ENCODE measurements at regions of chr11 and their contacts with region 1.

Region 1: DNA sequence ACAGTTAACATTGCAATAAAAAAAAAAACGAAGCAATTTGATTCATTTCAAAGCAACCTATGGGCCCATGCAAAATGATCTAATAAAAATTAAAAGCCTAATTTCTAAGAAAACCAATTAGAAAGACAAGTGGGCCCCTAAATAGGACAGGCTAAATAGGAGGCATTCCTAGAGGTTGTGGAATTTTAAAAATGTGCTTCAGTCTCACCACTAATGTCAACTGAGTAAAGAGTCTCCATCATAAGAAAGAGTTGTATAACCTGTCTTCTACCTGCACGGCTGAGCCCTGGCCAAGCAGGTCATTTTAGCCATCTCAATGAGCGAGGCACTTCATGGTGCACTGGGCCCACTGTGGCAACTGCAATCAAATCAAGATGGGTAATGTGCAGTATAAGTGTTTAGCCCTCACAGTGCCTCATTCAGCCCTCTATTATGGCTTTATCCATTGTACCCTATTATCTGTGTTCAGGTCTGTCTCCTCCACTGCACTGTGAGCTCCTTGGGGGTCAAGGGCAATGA is 76.4 kb downstream of the PRSS23 start:
- DNase-seq: no peak
- ATAC-seq: no peak
- H3K4me3 ChIP-seq: no peak overlapping the region
- H3K27ac ChIP-seq: no peak overlapping the region
- H3K4me1 ChIP-seq: no peaks in the 10 kb centered on the region
- H3K27me3 ChIP-seq: no peaks in the 10 kb centered on the region

Region 2: DNA sequence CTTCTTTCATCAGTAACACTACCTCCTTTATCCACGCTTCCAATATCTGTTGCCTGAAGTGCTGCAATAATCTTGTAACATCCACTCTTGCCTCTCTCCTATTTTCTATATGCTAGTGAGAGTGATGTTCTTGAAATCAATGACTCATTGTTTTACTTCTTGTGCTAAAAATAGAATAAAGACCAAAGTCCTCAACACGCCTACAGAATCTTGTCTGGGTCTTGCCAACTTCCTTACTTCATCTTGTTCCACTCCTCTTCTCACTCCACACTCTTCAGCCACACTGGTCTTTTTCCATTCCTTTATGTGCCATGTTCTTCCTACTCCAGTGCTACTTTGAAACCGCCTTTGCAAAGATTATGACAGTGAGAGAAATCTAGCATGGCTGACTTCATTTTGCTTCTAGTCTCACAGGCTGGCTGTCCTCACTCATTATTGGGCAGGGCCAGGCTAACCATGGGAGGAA is 365.7 kb before region 1 on chr11:
- intact Hi-C with region 1: no loop called
- DNase-seq: no peak
- ATAC-seq: peak in 1 of 2 donors; percentile 44
- H3K4me3 ChIP-seq: no peak overlapping the region
- H3K27ac ChIP-seq: peak overlapping the region; percentile 37
- H3K4me1 ChIP-seq: peaks cover 14% of the 10 kb centered on the region
- H3K27me3 ChIP-seq: no peaks in the 10 kb centered on the region

Region 3: GRCh38 chr11:86919557-86920210 is 42.9 kb after region 1 on chr11:
- intact Hi-C with region 1: loop called (anchors 2 to 5 kb)
- DNase-seq: no peak
- ATAC-seq: peak; percentile 61 to 71
- H3K4me3 ChIP-seq: no peak overlapping the region
- H3K27ac ChIP-seq: peak overlapping the region; percentile 75
- H3K4me1 ChIP-seq: peaks cover 4% of the 10 kb centered on the region
- H3K27me3 ChIP-seq: no peaks in the 10 kb centered on the region

Region 4: GRCh38 chr11:87193756-87194470 is 317.1 kb after region 1 on chr11:
- intact Hi-C with region 1: no loop called
- DNase-seq: no peak
- ATAC-seq: no peak
- H3K4me3 ChIP-seq: no peak overlapping the region
- H3K27ac ChIP-seq: no peak overlapping the region
- H3K4me1 ChIP-seq: no peaks in the 10 kb centered on the region
- H3K27me3 ChIP-seq: no peaks in the 10 kb centered on the region

Measured in right cardiac atrium (tissue), 5 donors.